CD4-positive, alpha-beta memory T cell (primary cell): ENCODE measurements at regions of chr3 and their contacts with region 1.

Region 1: GRCh38 chr3:5136211-5136918 is 14.3 kb downstream of the ARL8B start:
- DNase-seq: peak; percentile 49 to 67 (median 62)
- H3K4me3 ChIP-seq: no peak overlapping the region
- H3K4me3 Mint-ChIP-seq: peak overlapping the region in 2 of 8 donors; percentile 0 to 51
- H3K27ac ChIP-seq: no peak overlapping the region
- H3K27ac Mint-ChIP-seq: peak overlapping the region; percentile 9 to 74 (median 47)
- H3K4me1 ChIP-seq: peaks cover 49% of the 10 kb centered on the region
- H3K4me1 Mint-ChIP-seq: peaks cover 47 to 73% (median 62%) of the 10 kb centered on the region in 4 donors
- H3K27me3 ChIP-seq: no peaks in the 10 kb centered on the region
- H3K27me3 Mint-ChIP-seq: no peaks in the 10 kb centered on the region

Region 2: DNA sequence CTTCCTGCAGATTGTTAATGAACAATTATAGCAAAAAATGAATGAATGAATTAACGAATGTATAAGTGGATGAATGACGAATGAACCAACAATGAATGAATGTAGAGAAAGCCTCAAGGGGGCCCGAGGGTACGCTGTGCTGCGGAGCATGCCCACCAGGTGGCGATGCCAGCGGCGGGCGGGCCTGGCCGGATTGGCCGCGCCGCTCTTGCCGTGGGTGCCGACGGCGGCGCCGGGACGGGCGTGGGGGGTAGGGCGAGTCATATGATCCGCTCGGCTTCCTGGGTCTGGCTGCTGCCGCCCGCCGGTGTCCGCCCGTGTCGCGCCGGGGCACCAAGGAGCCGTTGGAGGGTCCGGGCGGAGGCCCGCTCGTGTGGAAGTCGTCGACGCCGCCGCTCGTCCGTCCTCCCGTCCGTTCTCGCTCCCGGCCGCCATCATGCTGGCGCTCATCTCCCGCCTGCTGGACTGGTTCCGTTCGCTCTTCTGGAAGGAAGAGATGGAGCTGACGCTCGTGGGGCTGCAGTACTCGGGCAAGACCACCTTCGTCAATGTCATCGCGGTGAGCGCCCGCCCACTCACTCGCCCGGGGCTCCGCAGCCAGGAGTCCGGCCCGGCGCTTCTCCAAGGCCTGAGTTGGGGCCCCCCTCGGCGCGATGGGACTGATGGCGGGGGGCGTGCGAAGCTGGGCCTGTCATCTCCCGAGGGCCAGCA is 14.2 kb before region 1 on chr3 and contains the start of gene ARL8B:
- CTCF ChIA-PET with region 1: interaction called, 16 read pairs
- POLR2A ChIA-PET with region 1: interaction called, 10 read pairs
- intact Hi-C with region 1: no loop called
- DNase-seq: peak; percentile 87 to 90 (median 88)
- H3K4me3 ChIP-seq: peak within 1 kb of the TSS; percentile 64 to 93
- H3K4me3 Mint-ChIP-seq: peak within 1 kb of the TSS; percentile 84 to 97 (median 92)
- H3K27ac ChIP-seq: peak within 1 kb of the TSS; percentile 94
- H3K27ac Mint-ChIP-seq: peak within 1 kb of the TSS; percentile 92 to 97 (median 93)
- H3K4me1 ChIP-seq: peaks cover 50% of the 10 kb centered on the region
- H3K4me1 Mint-ChIP-seq: peaks cover 26 to 52% (median 39%) of the 10 kb centered on the region in 4 donors
- H3K27me3 ChIP-seq: no peaks in the 10 kb centered on the region
- H3K27me3 Mint-ChIP-seq: no peaks in the 10 kb centered on the region
- total RNA-seq, gene ARL8B: 55.5 to 60.5 TPM

Region 3: DNA sequence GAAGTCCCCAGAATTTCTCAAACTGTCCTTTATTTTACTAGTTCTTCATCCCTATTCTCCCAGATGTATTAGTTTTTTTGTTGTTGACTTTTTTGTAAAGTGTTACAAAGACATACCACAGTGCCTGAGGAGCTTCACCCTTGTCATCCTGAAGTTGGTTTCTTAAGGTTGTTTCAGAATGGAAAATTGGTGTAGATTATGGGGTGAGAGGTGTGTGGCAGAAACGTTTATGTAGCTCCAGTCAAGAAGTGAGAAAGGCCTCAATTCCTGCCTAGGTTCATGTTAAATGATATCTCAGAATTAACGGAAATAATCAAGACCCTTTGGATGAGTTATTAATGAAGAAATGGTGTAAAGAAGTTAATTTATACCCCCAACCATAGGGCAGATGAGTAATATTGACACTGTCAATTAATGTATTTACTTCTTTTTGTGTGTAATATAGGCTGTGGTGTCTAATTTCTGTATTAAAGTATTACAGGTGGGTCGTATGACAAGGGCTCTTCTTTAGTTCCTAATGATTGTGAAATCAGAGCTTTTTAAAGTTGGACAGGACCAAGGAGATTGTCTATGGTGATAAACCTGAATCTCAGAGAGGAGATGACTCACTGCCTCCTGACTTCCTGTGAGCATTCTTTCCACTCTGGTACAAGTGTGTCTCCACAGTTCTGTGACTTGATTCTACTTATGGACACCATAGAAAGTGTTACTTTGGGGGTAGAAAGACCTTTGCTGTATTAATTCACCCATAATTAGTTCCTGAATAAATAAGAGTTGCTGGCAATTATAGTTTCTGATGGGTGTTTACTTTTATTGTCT is 58.2 kb after region 1 on chr3:
- CTCF ChIA-PET with region 1: interaction called, 7 read pairs
- POLR2A ChIA-PET with region 1: interaction called, 5 read pairs
- intact Hi-C with region 1: loop called (anchors 2 kb)
- DNase-seq: peak; percentile 32 to 87 (median 47)
- H3K4me3 ChIP-seq: no peak overlapping the region
- H3K4me3 Mint-ChIP-seq: peak overlapping the region in 7 of 8 donors; percentile 37 to 81 (median 63)
- H3K27ac ChIP-seq: peak overlapping the region; percentile 54
- H3K27ac Mint-ChIP-seq: peak overlapping the region; percentile 89 to 98 (median 94)
- H3K4me1 ChIP-seq: peaks cover 88% of the 10 kb centered on the region
- H3K4me1 Mint-ChIP-seq: peaks cover 71 to 92% (median 80%) of the 10 kb centered on the region in 4 donors
- H3K27me3 ChIP-seq: no peaks in the 10 kb centered on the region
- H3K27me3 Mint-ChIP-seq: no peaks in the 10 kb centered on the region

Region 4: GRCh38 chr3:5232570-5232969 is 96.2 kb after region 1 on chr3:
- CTCF ChIA-PET with region 1: interaction called, 24 read pairs
- POLR2A ChIA-PET with region 1: no interaction called
- intact Hi-C with region 1: loop called (anchors 2 kb)
- DNase-seq: no peak
- H3K4me3 ChIP-seq: no peak overlapping the region
- H3K4me3 Mint-ChIP-seq: no peak overlapping the region
- H3K27ac ChIP-seq: no peak overlapping the region
- H3K27ac Mint-ChIP-seq: no peak overlapping the region
- H3K4me1 ChIP-seq: no peaks in the 10 kb centered on the region
- H3K4me1 Mint-ChIP-seq: no peaks in the 10 kb centered on the region
- H3K27me3 ChIP-seq: no peaks in the 10 kb centered on the region
- H3K27me3 Mint-ChIP-seq: no peaks in the 10 kb centered on the region

Region 5: GRCh38 chr3:5426094-5426883 is 289.9 kb after region 1 on chr3:
- CTCF ChIA-PET with region 1: interaction called, 5 read pairs
- POLR2A ChIA-PET with region 1: no interaction called
- intact Hi-C with region 1: loop called (anchors 5 kb)
- DNase-seq: peak in 4 of 5 donors; percentile 20 to 31 (median 20)
- H3K4me3 ChIP-seq: no peak overlapping the region
- H3K4me3 Mint-ChIP-seq: no peak overlapping the region
- H3K27ac ChIP-seq: no peak overlapping the region
- H3K27ac Mint-ChIP-seq: peak overlapping the region in 1 of 7 donors; percentile 15
- H3K4me1 ChIP-seq: no peaks in the 10 kb centered on the region
- H3K4me1 Mint-ChIP-seq: peaks cover 6 to 10% (median 9%) of the 10 kb centered on the region in 4 donors
- H3K27me3 ChIP-seq: no peaks in the 10 kb centered on the region
- H3K27me3 Mint-ChIP-seq: peaks cover 2 to 12% of the 10 kb centered on the region in 2 donors